Heart right ventricle (tissue), 16 donors: ENCODE measurements at regions of chr5 and their contacts with region 1.

Region 1: GRCh38 chr5:6311568-6312501 is 66.5 kb downstream of the MED10 start:
- DNase-seq: peak; percentile 17 to 69
- ATAC-seq: peak; percentile 86 to 99 (median 96)
- H3K4me3 ChIP-seq: no peak overlapping the region
- H3K27ac ChIP-seq: peak overlapping the region in 6 of 10 donors; percentile 12 to 78 (median 68)
- H3K4me1 ChIP-seq: peaks cover 0 to 8% (median 0%) of the 10 kb centered on the region in 9 donors
- H3K27me3 ChIP-seq: no peaks in the 10 kb centered on the region
- CTCF ChIP-seq: no peak

Region 2: DNA sequence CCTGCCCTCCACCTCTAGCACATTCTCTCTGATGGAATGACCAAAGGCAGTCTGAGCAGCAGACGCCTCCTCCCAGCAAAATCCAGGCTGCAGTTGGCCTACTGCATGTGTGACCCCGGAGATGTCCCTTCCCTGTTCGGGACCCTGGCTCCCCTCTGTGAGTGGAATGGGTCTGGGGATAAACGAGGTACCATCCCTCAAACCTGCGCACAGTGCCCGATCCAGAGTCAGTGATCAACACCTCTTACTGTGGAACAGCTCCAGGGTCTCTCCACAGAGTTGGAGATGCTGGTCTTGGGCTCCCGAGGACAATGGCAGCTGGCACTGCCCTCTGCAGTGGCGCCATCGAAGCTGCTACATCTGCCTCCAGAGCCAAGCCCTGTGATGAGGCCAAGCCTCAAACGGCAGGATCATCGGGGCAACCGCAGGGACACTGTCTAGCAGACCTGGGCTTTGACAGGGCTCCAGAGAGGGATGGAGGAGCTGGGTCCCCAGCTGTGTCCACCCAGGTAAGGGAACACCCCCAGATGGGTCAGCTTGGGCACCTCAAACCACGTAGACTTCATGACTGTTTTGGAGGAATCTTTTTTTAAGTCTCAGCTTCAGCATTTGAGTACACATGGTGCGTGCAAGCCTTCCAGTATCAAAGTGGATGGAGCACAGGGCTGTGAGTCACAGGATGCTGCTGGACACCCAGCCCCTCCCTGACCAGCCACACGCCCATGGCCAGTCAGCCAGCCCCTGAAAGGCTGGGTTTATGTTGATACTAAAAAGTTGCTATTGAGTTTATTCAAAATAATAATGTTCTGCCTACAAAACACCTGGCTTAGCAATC is 53.5 kb after region 1 on chr5:
- intact Hi-C with region 1: loop called in 1 of 10 experiments (anchors 5 kb)
- DNase-seq: no peak
- ATAC-seq: peak in 1 of 8 donors; percentile 52
- H3K4me3 ChIP-seq: no peak overlapping the region
- H3K27ac ChIP-seq: no peak overlapping the region
- H3K4me1 ChIP-seq: no peaks in the 10 kb centered on the region
- H3K27me3 ChIP-seq: no peaks in the 10 kb centered on the region
- CTCF ChIP-seq: no peak

Region 3: GRCh38 chr5:6435356-6435755 is 123.5 kb after region 1 on chr5:
- intact Hi-C with region 1: loop called in 2 of 10 experiments (anchors 10 kb)
- DNase-seq: no peak
- ATAC-seq: no peak
- H3K4me3 ChIP-seq: no peak overlapping the region
- H3K27ac ChIP-seq: no peak overlapping the region
- H3K4me1 ChIP-seq: peaks cover 0 to 21% (median 6%) of the 10 kb centered on the region in 9 donors
- H3K27me3 ChIP-seq: peaks cover 0 to 15% (median 0%) of the 10 kb centered on the region in 7 donors
- CTCF ChIP-seq: peak in 7 of 9 donors; percentile 20 to 46 (median 34)

Region 4: GRCh38 chr5:7000310-7000709 is 688.5 kb after region 1 on chr5:
- intact Hi-C with region 1: no loop called
- DNase-seq: no peak
- ATAC-seq: no peak
- H3K4me3 ChIP-seq: no peak overlapping the region
- H3K27ac ChIP-seq: no peak overlapping the region
- H3K4me1 ChIP-seq: no peaks in the 10 kb centered on the region
- H3K27me3 ChIP-seq: no peaks in the 10 kb centered on the region
- CTCF ChIP-seq: no peak